Naive thymus-derived CD4-positive, alpha-beta T cell (primary cell): ENCODE measurements at regions of chr7 and their contacts with region 1.

Region 1: DNA sequence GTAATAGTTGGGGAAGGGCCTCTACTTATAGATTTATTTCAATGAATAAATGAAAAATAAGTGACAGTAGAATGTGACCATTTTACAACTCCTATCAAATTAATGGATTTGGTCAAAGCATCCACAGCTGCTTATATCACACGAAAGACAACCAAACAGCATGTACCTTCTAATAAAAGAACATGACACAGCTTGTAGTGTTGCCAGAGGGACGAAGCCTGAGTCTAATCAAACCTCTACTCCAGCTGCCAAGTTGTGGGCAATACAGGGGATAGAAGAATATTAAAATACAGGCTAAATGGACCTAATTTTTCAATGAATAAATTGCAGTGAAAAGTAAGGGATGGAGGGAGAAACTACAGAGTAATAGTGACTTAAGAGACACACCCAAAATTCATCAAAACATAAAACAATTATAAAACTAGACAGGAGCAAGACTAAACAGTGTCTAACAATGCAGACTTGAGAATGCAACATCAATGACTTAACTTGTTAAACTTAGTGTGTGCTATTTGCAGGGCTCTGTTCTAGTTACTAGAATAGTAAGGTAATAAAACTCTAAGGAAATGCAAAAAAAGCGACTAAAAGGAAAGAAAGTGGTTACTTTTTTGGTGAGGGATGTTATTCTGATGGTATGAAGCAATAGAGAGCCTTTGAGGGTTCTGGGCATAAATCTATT is 853.8 kb downstream of the GRM8 start:
- DNase-seq: no peak
- ATAC-seq: no peak
- H3K4me3 ChIP-seq: no peak overlapping the region
- H3K4me3 Mint-ChIP-seq: no peak overlapping the region
- H3K27ac ChIP-seq: no peak overlapping the region
- H3K27ac Mint-ChIP-seq: no peak overlapping the region
- H3K4me1 ChIP-seq: no peaks in the 10 kb centered on the region
- H3K4me1 Mint-ChIP-seq: no peaks in the 10 kb centered on the region
- H3K27me3 ChIP-seq: no peaks in the 10 kb centered on the region
- H3K27me3 Mint-ChIP-seq: no peaks in the 10 kb centered on the region

Region 2: GRCh38 chr7:126119981-126120380 is 279.0 kb before region 1 on chr7:
- CTCF ChIA-PET with region 1: no interaction called
- POLR2A ChIA-PET with region 1: no interaction called
- intact Hi-C with region 1: no loop called
- DNase-seq: no peak
- ATAC-seq: no peak
- H3K4me3 ChIP-seq: no peak overlapping the region
- H3K4me3 Mint-ChIP-seq: no peak overlapping the region
- H3K27ac ChIP-seq: no peak overlapping the region
- H3K27ac Mint-ChIP-seq: no peak overlapping the region
- H3K4me1 ChIP-seq: no peaks in the 10 kb centered on the region
- H3K4me1 Mint-ChIP-seq: no peaks in the 10 kb centered on the region
- H3K27me3 ChIP-seq: no peaks in the 10 kb centered on the region
- H3K27me3 Mint-ChIP-seq: no peaks in the 10 kb centered on the region

Region 3: GRCh38 chr7:126411032-126411820 is 12.2 kb after region 1 on chr7:
- CTCF ChIA-PET with region 1: no interaction called
- POLR2A ChIA-PET with region 1: no interaction called
- intact Hi-C with region 1: loop called in 1 of 2 experiments (anchors 1 kb)
- DNase-seq: no peak
- ATAC-seq: no peak
- H3K4me3 ChIP-seq: no peak overlapping the region
- H3K4me3 Mint-ChIP-seq: peak overlapping the region in 1 of 10 donors; percentile 20
- H3K27ac ChIP-seq: no peak overlapping the region
- H3K27ac Mint-ChIP-seq: no peak overlapping the region
- H3K4me1 ChIP-seq: no peaks in the 10 kb centered on the region
- H3K4me1 Mint-ChIP-seq: no peaks in the 10 kb centered on the region
- H3K27me3 ChIP-seq: no peaks in the 10 kb centered on the region
- H3K27me3 Mint-ChIP-seq: no peaks in the 10 kb centered on the region

Region 4: DNA sequence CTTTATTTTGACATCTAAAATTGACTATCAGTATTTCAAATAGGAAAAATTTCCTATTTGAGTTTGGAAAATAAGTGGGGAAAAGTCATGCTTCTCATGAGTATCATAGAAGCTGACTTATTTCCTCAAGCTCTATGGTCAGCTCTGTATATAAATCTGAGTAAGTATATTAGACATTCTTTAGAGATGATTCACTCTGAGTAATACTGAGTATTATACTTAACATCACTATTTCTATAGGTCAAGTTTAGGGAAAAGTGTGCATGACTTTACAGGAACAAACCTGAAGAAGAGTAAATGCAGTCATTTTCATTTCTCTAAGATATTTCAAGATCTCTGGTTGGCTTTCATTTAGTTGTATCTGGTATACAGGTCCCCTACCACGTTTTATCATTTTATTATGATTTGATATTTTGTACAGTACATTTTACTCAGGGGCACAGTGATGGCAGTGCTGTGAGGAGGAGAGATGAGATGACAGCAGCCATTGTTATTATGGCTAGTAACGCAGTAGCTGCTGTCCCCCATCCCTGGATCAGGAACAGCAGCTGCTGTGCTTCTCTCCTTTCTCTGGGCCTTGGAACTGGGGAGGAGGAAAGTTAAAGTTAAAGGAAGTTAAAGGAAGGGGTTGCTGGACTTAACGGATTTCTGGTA is 1268.2 kb after region 1 on chr7:
- CTCF ChIA-PET with region 1: no interaction called
- POLR2A ChIA-PET with region 1: no interaction called
- intact Hi-C with region 1: no loop called
- DNase-seq: no peak
- ATAC-seq: no peak
- H3K4me3 ChIP-seq: no peak overlapping the region
- H3K4me3 Mint-ChIP-seq: no peak overlapping the region
- H3K27ac ChIP-seq: no peak overlapping the region
- H3K27ac Mint-ChIP-seq: peak overlapping the region in 2 of 9 donors; percentile 46 to 65
- H3K4me1 ChIP-seq: no peaks in the 10 kb centered on the region
- H3K4me1 Mint-ChIP-seq: peaks cover 38 to 71% (median 53%) of the 10 kb centered on the region in 7 donors
- H3K27me3 ChIP-seq: no peaks in the 10 kb centered on the region
- H3K27me3 Mint-ChIP-seq: no peaks in the 10 kb centered on the region